ENCODE measurements at regions of chr2 and their contacts with region 1.

Region 1: DNA sequence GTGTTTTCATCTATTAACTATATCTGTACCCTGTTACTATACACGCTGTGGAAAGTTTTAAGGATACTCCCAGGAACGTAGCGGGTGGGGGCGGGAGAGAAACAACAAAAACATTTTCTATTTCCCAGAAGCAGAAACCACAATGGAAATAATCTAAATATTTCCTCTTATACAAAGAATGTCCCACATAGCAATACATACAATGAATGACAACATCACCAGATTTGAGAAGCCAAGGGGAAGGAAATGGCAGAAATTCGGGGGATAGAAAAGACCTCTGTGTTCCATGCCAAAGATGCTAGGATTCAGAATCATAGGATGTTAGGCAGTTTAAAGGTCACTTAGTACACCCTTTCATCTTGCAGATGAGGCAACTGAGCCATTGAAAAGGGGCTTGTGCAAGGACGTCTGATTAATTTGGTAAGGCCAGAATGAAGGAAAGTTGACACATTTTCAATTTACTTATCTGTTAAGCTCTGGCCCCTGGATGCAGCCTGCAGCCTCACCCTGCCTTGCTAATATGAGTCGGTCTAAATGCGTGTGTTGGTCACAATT is 41.1 kb upstream of the SCYGR1 start:
- DNase-seq: peak; percentile 90
- ATAC-seq: peak; percentile 80
- H3K4me3 ChIP-seq: peak overlapping the region in 1 of 3 experiments; percentile 19; a peak in 1 of 6 replicates
- H3K27ac ChIP-seq: peak overlapping the region; percentile 35
- H3K4me1 ChIP-seq: peaks cover 39% of the 10 kb centered on the region
- H3K27me3 ChIP-seq: no peaks in the 10 kb centered on the region
- CTCF ChIP-seq: no peak
- EP300 ChIP-seq: peak; percentile 57 to 77; a peak in 2 of 4 replicates
- POLR2A ChIP-seq: no peak
- RAD21 ChIP-seq: no peak

Region 2: DNA sequence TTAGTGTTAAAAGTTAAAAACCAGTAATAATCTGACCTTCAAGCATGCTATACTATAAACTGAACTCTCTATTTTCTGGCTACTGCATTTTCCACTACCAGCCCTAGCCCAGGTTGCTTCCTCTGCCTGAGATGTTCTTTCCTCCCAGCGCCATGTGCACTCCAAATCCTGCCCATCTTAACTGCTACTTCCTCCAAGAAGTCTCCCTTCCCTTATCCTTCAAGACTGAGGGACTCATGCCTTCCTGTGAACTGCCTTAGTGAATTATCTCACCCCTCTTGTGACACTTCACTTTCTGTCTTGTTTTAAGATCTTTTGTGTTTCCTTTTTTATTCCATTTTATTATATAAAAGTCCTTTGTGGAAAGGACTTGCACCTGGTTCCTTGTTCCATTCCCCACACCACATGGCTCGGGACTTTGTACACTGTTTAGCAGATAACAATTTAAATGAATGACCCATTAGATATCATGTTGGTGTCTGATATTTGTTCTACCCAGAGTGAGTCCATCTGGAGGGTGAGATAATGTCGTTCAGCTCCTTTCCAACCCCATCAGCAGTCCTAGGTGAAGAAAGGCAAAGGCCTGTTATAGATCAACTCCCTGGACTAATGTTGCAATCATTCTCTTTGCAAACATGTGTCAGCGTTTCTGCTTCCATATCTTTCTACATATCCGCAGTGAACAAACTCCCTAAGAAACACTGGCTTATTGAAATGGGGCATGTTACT is 22.3 kb after region 1 on chr2:
- CTCF ChIA-PET with region 1: no interaction called
- POLR2A ChIA-PET with region 1: no interaction called
- in situ Hi-C with region 1: no loop called
- intact Hi-C with region 1: loop called (anchors 1 kb)
- DNase-seq: peak; percentile 99
- ATAC-seq: peak; percentile 93
- H3K4me3 ChIP-seq: peak overlapping the region in 1 of 3 experiments; percentile 17; a peak in 1 of 6 replicates
- H3K27ac ChIP-seq: peak overlapping the region; percentile 90
- H3K4me1 ChIP-seq: peaks cover 84% of the 10 kb centered on the region
- H3K27me3 ChIP-seq: no peaks in the 10 kb centered on the region
- CTCF ChIP-seq: no peak
- EP300 ChIP-seq: peak; percentile 92 to 98
- POLR2A ChIP-seq: peak in 1 of 2 experiments; percentile 50; a peak in 1 of 4 replicates
- RAD21 ChIP-seq: no peak; the same call in 1 of the 2 replicates

Region 3: DNA sequence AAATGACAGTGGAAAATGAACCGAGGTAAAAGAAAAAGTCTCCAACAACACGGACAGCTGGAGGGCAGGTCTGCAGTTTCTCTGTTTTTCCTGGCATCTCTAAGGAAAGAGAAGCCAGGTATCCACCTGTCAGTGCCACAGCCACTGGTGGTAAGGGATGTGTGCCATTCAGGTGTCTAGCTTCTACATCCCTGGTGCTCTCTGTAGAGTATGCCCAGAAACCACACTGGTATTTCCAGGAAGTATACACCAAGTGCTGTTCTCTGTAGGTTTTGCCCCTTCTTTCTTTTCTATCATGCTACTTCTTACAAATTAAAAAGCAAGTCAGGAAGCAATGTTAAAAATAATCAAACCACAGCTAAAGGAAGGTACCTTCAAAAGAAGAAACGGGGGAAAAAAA is 35.6 kb after region 1 on chr2:
- CTCF ChIA-PET with region 1: no interaction called
- POLR2A ChIA-PET with region 1: interaction called, 3 read pairs
- in situ Hi-C with region 1: no loop called
- intact Hi-C with region 1: loop called (anchors 2 kb)
- DNase-seq: no peak
- ATAC-seq: no peak
- H3K4me3 ChIP-seq: no peak overlapping the region
- H3K27ac ChIP-seq: no peak overlapping the region
- H3K4me1 ChIP-seq: peaks cover 71% of the 10 kb centered on the region
- H3K27me3 ChIP-seq: no peaks in the 10 kb centered on the region
- CTCF ChIP-seq: no peak
- EP300 ChIP-seq: no peak
- POLR2A ChIP-seq: no peak
- RAD21 ChIP-seq: no peak

Region 4: DNA sequence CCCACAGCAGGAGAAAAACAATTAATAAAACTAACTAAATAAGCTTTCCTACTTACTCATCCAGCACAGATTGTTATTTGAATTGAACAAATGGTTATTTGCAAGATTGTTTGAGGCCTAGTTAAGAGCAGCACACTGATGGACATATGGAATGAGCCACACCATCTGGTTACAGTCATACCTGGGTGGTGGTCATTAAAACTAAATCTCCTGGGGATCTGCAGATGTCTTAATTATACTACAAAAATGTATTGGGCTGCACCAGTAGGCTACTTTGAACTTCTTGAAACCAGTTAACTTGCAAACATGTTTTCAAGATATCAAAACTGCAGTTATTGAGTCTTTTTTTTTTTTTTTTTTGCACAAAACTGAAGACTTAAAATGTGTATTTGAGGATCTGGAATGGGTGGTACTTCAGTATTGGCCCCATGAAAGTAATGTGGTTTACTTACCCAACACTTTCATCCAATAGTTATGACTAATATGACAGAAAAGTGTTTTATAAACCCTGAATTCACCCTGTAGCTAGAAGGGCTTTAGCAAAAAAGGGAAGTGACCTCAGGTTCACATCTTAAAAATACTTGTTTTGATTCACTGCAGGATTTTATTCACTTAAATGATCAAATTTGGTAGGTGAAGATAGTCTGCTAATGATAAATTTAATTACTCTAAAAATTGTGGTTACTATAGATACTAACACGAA is 54.0 kb after region 1 on chr2:
- CTCF ChIA-PET with region 1: no interaction called
- POLR2A ChIA-PET with region 1: no interaction called
- in situ Hi-C with region 1: no loop called
- intact Hi-C with region 1: no loop called
- DNase-seq: no peak
- ATAC-seq: no peak
- H3K4me3 ChIP-seq: no peak overlapping the region
- H3K27ac ChIP-seq: no peak overlapping the region
- H3K4me1 ChIP-seq: peaks cover 28% of the 10 kb centered on the region
- H3K27me3 ChIP-seq: no peaks in the 10 kb centered on the region
- CTCF ChIP-seq: no peak
- EP300 ChIP-seq: no peak
- POLR2A ChIP-seq: no peak
- RAD21 ChIP-seq: no peak